ENCODE measurements at regions of chr2 and their contacts with region 1.

Region 1: GRCh38 chr2:74587664-74588277 is 33.3 kb downstream of the DOK1 start:
- H3K4me3 ChIP-seq: no peak overlapping the region
- H3K27ac ChIP-seq: no peak overlapping the region
- H3K4me1 ChIP-seq: no peaks in the 10 kb centered on the region
- CTCF ChIP-seq: peak; percentile 63; the same call in 1 of the 2 replicates

Region 2: GRCh38 chr2:74399785-74400184 is 188.0 kb before region 1 on chr2:
- CTCF ChIA-PET with region 1: no interaction called
- POLR2A ChIA-PET with region 1: no interaction called
- H3K4me3 ChIP-seq: no peak overlapping the region
- H3K27ac ChIP-seq: no peak overlapping the region
- H3K4me1 ChIP-seq: no peaks in the 10 kb centered on the region
- CTCF ChIP-seq: no peak

Region 3: GRCh38 chr2:74482801-74483674 is 104.7 kb before region 1 on chr2 and contains the starts of genes CCDC142 and TTC31:
- CTCF ChIA-PET with region 1: interaction called, 72 read pairs
- POLR2A ChIA-PET with region 1: interaction called, 4 read pairs
- H3K4me3 ChIP-seq: peak within 1 kb of the TSS; percentile 92
- H3K27ac ChIP-seq: peak within 1 kb of the TSS; percentile 74
- H3K4me1 ChIP-seq: no peaks in the 10 kb centered on the region
- CTCF ChIP-seq: peak; percentile 88

Region 4: DNA sequence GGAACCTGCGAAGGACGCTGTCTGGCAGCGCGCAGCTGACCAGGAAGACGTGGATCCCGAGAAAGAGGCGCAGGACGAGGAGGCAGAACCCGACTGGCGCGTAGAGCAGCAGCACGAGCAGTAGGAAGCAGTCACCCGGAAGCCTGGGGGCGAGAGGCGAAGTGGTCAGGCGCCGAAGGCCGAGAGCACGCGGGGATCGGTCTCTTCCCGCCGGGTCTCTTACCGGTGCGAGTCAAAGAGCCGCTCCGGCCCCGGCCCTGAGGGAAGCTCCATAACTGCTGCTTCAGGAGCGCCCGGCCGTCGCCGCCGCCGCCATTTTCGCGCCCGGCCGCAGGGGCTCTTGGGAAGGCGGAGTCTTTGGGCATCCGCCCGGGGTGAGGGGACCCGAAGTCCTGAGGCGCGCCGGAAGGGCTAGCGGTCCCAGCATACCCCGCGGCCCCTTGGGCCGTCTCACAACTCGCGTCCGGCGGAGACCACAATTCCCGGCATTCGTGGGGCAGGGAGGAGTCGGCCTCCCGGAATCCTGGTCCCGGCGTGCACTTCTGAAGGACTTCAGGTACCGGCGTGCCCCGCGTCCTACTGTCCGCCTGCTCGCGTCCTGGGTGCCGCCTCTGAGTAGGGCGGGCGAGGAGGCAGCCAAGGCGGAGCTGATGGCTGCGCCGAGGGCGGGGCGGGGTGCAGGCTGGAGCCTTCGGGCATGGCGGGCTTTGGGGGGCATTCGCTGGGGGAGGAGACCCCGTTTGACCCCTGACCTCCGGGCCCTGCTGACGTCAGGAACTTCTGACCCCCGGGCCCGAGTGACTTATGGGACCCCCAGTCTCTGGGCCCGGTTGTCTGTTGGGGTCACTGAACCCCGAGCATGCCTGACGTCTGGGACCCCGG is 58.2 kb before region 1 on chr2 and contains the starts of genes AUP1 and HTRA2:
- CTCF ChIA-PET with region 1: interaction called, 30 read pairs
- POLR2A ChIA-PET with region 1: interaction called, 6 read pairs
- H3K4me3 ChIP-seq: peak within 1 kb of the TSS; percentile 57
- H3K27ac ChIP-seq: peak within 1 kb of the TSS; percentile 72
- H3K4me1 ChIP-seq: no peaks in the 10 kb centered on the region; the same call in 1 of the 2 replicates
- CTCF ChIP-seq: no peak

Region 5: GRCh38 chr2:74566754-74567085 is 21.1 kb before region 1 on chr2:
- CTCF ChIA-PET with region 1: interaction called, 10 read pairs
- POLR2A ChIA-PET with region 1: no interaction called
- H3K4me3 ChIP-seq: no peak overlapping the region
- H3K27ac ChIP-seq: no peak overlapping the region
- H3K4me1 ChIP-seq: no peaks in the 10 kb centered on the region
- CTCF ChIP-seq: no peak

Region 6: DNA sequence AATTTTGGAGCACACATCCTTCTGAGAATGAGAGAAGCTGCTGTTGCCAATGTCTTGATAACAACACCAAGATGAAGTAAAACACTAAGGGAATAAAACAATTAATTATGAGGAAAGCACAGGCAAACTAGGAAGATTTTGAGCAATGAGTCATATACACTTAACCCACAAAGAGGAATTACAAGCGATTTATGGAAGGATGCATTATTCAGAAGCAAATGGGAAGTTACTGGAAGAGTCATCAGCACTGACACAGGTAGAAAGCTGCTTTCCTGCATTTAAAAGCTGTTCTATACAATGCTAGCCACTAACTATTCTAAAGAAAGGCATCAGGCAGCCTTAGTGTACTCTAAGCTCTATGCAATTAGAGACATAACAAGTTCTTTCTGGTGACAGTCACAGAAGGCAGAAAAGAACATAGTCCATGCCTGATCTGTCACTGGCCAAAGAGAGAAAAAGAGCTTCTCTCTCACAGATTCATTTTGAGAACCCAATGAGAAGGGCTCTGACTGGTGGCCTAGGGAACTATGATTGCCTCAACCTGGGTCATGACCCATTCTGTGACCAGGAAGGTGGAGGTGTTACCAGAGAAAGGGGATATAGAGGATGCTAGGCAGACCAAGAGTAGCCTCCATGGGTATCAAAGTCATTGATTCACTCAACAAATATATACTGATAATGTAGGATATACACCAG is 15.0 kb after region 1 on chr2:
- CTCF ChIA-PET with region 1: interaction called, 13 read pairs
- POLR2A ChIA-PET with region 1: no interaction called
- H3K4me3 ChIP-seq: no peak overlapping the region
- H3K27ac ChIP-seq: no peak overlapping the region
- H3K4me1 ChIP-seq: 0 out of 2 replicates have a peak, but pooled peaks cover 4% of the 10 kb centered on the region
- CTCF ChIP-seq: no peak